ENCODE measurements at regions of chr12 and their contacts with region 1.

Region 1: GRCh38 chr12:66087365-66087943 is 43.1 kb downstream of the LLPH start:
- DNase-seq: no peak
- ATAC-seq: peak; percentile 95
- H3K4me3 ChIP-seq: no peak overlapping the region
- H3K27ac ChIP-seq: peak overlapping the region; percentile 28; the same call in 1 of the 2 replicates
- H3K4me1 ChIP-seq: no peaks in the 10 kb centered on the region
- H3K27me3 ChIP-seq: no peaks in the 10 kb centered on the region
- CTCF ChIP-seq: peak; percentile 74 to 90 (median 85)
- EP300 ChIP-seq: no peak
- POLR2A ChIP-seq: no peak
- RAD21 ChIP-seq: peak; percentile 97

Region 2: DNA sequence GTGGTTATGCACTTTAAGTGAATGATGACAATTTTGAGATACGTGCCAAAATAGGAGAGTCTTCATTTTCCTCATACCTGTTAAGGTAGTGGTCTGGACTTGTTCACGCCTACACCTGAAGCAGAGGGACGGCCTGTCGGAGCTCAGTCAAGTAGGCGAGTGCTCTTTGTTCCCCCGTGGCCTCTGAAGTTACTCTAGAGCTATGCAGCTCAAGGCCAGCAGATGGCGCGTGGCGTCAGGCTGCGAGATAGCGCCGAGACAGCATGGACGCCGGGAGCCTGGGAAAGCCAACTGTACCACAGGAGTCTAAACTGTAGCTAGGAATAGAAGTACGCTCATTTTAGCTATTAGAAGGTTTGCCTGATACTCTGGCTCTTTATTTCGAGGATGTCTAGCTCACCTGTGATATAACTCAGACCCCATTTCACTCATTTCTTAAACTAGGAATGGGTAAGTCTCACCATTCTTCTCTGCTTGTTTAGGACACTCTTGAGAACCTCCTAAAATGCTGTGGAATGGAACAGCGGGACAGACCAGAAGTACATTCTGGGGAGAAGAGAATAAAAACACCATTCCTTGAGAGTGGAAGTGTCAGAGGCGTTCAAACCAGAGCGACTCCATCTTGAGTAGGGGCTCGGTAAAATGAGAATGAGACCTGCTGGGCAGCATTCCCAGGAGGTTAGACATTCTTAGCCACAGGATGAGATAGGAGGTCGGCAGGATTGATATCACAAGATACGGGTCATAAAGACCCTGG is 530.6 kb before region 1 on chr12:
- CTCF ChIA-PET with region 1: interaction called, 28 read pairs
- POLR2A ChIA-PET with region 1: no interaction called
- RAD21 ChIA-PET with region 1: interaction called, 10 read pairs
- SMC1A ChIA-PET with region 1: interaction called, 8 read pairs
- in situ Hi-C with region 1: no loop called
- intact Hi-C with region 1: loop called (anchors 1 kb)
- DNase-seq: peak; percentile 9
- ATAC-seq: peak; percentile 100
- H3K4me3 ChIP-seq: no peak overlapping the region
- H3K27ac ChIP-seq: no peak overlapping the region
- H3K4me1 ChIP-seq: no peaks in the 10 kb centered on the region
- H3K27me3 ChIP-seq: no peaks in the 10 kb centered on the region
- CTCF ChIP-seq: peak; percentile 91 to 95 (median 94); a peak in 5 of 6 replicates
- EP300 ChIP-seq: no peak
- POLR2A ChIP-seq: no peak
- RAD21 ChIP-seq: peak; percentile 96

Region 3: GRCh38 chr12:65685514-65685913 is 401.9 kb before region 1 on chr12:
- CTCF ChIA-PET with region 1: no interaction called
- POLR2A ChIA-PET with region 1: no interaction called
- RAD21 ChIA-PET with region 1: no interaction called
- SMC1A ChIA-PET with region 1: no interaction called
- in situ Hi-C with region 1: no loop called
- intact Hi-C with region 1: loop called (anchors 10 kb)
- DNase-seq: no peak
- ATAC-seq: peak; percentile 51; the same call in 2 of the 3 replicates
- H3K4me3 ChIP-seq: no peak overlapping the region
- H3K27ac ChIP-seq: no peak overlapping the region
- H3K4me1 ChIP-seq: no peaks in the 10 kb centered on the region
- H3K27me3 ChIP-seq: 0 out of 4 replicates have a peak, but pooled peaks cover 0 to 3% of the 10 kb centered on the region in 2 experiments
- CTCF ChIP-seq: peak; percentile 24 to 40 (median 28); a peak in 4 of 6 replicates
- EP300 ChIP-seq: no peak
- POLR2A ChIP-seq: no peak
- RAD21 ChIP-seq: peak; percentile 52; the same call in 1 of the 2 replicates

Region 4: GRCh38 chr12:65696220-65696619 is 391.2 kb before region 1 on chr12:
- CTCF ChIA-PET with region 1: no interaction called
- POLR2A ChIA-PET with region 1: no interaction called
- RAD21 ChIA-PET with region 1: no interaction called
- SMC1A ChIA-PET with region 1: no interaction called
- in situ Hi-C with region 1: no loop called
- intact Hi-C with region 1: no loop called
- DNase-seq: no peak
- ATAC-seq: no peak
- H3K4me3 ChIP-seq: no peak overlapping the region
- H3K27ac ChIP-seq: no peak overlapping the region
- H3K4me1 ChIP-seq: no peaks in the 10 kb centered on the region
- H3K27me3 ChIP-seq: 0 out of 4 replicates have a peak, but pooled peaks cover 0 to 3% of the 10 kb centered on the region in 2 experiments
- CTCF ChIP-seq: no peak
- EP300 ChIP-seq: no peak
- POLR2A ChIP-seq: no peak
- RAD21 ChIP-seq: no peak

Region 5: DNA sequence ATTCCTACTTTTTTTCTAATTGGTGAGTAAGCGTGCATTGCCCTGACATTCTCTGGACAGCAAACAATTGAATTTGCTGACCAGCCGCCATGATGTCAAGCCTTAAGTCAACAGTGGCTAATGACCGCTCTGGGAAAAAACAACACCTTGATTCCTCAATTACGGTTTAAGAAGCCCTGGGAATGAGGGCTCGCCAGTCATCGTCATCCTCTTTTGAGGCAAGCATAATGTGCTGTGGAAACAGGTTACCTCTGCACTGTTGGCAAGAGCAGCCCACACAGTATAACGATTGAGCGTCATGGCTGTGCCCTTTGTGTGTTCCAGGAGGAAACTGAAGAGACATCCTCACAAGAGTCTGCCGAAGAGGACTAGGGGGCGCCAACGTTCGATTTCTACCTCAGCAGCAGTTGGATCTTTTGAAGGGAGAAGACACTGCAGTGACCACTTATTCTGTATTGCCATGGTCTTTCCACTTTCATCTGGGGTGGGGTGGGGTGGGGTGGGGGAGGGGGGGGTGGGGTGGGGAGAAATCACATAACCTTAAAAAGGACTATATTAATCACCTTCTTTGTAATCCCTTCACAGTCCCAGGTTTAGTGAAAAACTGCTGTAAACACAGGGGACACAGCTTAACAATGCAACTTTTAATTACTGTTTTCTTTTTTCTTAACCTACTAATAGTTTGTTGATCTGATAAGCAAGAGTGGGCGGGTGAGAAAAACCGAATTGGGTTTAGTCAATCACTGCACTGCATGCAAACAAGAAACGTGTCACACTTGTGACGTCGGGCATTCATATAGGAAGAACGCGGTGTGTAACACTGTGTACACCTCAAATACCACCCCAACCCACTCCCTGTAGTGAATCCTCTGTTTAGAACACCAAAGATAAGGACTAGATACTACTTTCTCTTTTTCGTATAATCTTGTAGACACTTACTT is 124.3 kb before region 1 on chr12:
- CTCF ChIA-PET with region 1: interaction called, 6 read pairs
- POLR2A ChIA-PET with region 1: no interaction called
- RAD21 ChIA-PET with region 1: interaction called, 3 read pairs
- SMC1A ChIA-PET with region 1: interaction called, 11 read pairs
- in situ Hi-C with region 1: no loop called
- intact Hi-C with region 1: loop called (anchors 2 kb)
- DNase-seq: no peak
- ATAC-seq: peak; percentile 78
- H3K4me3 ChIP-seq: no peak overlapping the region
- H3K27ac ChIP-seq: no peak overlapping the region
- H3K4me1 ChIP-seq: no peaks in the 10 kb centered on the region
- H3K27me3 ChIP-seq: no peaks in the 10 kb centered on the region
- CTCF ChIP-seq: peak; percentile 13 to 51 (median 40); a peak in 3 of 6 replicates
- EP300 ChIP-seq: no peak
- POLR2A ChIP-seq: no peak
- RAD21 ChIP-seq: 0 out of 2 replicates have a peak, but pooled peaks have one; percentile 8

Region 6: GRCh38 chr12:66035288-66035966 is 52.0 kb before region 1 on chr12:
- CTCF ChIA-PET with region 1: interaction called, 26 read pairs
- POLR2A ChIA-PET with region 1: interaction called, 3 read pairs
- RAD21 ChIA-PET with region 1: interaction called, 10 read pairs
- SMC1A ChIA-PET with region 1: interaction called, 16 read pairs
- in situ Hi-C with region 1: no loop called
- intact Hi-C with region 1: no loop called
- DNase-seq: no peak
- ATAC-seq: peak; percentile 20; the same call in 1 of the 3 replicates
- H3K4me3 ChIP-seq: no peak overlapping the region
- H3K27ac ChIP-seq: no peak overlapping the region
- H3K4me1 ChIP-seq: peaks cover 12% of the 10 kb centered on the region; the same call in 1 of the 2 replicates
- H3K27me3 ChIP-seq: no peaks in the 10 kb centered on the region
- CTCF ChIP-seq: peak in 2 of 3 experiments; percentile 28 to 34; a peak in 3 of 6 replicates
- EP300 ChIP-seq: no peak
- POLR2A ChIP-seq: no peak
- RAD21 ChIP-seq: peak; percentile 58

Region 7: GRCh38 chr12:66107451-66107915 is 20.0 kb after region 1 on chr12:
- CTCF ChIA-PET with region 1: interaction called, 12 read pairs
- POLR2A ChIA-PET with region 1: no interaction called
- RAD21 ChIA-PET with region 1: interaction called, 4 read pairs
- SMC1A ChIA-PET with region 1: interaction called, 7 read pairs
- in situ Hi-C with region 1: no loop called
- intact Hi-C with region 1: no loop called
- DNase-seq: peak; percentile 56
- ATAC-seq: peak; percentile 97
- H3K4me3 ChIP-seq: no peak overlapping the region
- H3K27ac ChIP-seq: no peak overlapping the region
- H3K4me1 ChIP-seq: no peaks in the 10 kb centered on the region
- H3K27me3 ChIP-seq: no peaks in the 10 kb centered on the region
- CTCF ChIP-seq: peak; percentile 67 to 83 (median 75)
- EP300 ChIP-seq: no peak
- POLR2A ChIP-seq: no peak
- RAD21 ChIP-seq: peak; percentile 90

Measured in GM12878 (cell line).